Left cardiac atrium (tissue), 4 donors: ENCODE measurements at regions of chr13 and their contacts with region 1.

Region 1: DNA sequence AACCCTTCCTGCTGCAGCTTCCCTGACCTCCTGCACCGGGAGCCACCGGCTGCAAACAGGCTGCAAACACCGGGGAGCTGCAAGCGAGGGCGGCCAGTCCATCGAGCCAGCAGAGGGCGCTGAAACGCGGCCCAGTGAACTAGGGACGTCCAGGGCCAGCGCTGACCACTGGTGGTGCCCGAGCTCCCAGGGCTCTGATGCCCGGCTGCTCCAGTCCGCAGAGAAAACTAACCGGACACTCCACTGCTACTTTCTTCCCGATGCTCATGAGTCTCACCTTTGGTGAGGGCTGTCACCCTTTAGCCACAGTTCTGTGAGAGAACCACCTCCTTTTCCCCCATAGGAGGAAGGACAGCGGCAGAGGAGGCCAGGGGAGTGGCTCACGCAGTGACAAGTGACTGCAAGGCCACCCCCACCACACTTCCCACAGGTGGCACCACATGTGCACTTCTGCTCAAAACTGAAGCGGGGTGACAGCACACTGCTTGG is 82.8 kb upstream of the MTIF3 start:
- DNase-seq: peak; percentile 88
- ATAC-seq: peak; percentile 99

Region 2: DNA sequence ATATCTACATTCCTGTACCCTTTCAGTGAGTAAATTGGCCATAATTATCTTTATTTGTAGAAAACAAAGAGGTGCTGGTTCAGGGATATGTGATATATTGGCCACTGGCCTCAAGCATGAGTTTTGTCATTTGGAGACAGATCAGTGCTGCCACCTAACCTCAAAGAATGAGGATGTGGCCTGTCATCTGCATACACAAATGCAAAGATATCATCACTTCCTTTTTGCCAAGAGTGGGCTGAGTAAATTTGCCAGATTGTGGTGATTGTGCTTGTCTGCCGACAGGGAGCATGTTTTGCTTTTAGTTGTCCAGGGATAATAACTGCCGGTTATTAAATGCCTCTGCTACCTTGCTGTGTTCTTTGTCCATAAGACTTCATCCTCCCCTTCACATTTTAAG is 931.5 kb before region 1 on chr13:
- intact Hi-C with region 1: no loop called
- DNase-seq: no peak
- ATAC-seq: no peak

Region 3: DNA sequence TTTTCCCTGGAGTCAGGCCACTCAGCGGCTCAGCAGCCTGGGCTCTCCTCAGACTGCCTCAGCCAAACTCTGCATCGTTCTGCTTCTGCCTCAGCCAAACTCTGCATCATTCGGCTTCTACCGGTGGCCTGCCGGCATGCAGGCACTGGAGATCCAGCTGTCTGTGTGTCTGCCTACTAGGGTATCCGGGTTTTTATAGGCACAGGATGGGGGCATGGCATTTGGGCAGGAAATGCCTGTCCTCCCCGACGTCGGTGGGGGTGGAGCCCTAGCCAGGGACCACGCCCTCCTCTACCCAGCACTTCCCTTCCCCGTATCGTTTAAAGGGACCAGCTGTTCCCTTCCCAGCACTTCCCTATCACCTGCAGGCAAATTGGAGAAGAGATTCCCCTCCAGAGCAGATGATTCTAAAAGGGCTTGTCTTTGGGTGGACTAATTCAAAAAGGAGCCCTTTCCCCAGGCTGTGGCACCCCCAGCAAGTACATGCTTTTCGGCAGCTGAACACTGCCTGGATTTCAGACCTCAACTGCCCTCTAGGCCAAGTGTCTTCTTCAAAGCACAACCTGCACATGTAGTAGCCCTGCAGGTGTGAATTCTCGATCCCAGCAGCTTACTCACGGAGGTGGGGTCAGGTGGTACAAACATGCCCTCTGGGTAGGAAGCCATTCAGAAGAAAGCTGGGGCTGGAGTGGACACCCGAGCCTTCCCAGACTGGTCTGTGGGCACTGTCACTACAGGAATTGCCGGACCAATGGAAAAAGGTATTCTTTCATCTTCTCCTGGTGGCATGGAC is 747.2 kb before region 1 on chr13:
- intact Hi-C with region 1: no loop called
- DNase-seq: peak; percentile 41
- ATAC-seq: peak in 1 of 2 donors; percentile 84

Region 4: DNA sequence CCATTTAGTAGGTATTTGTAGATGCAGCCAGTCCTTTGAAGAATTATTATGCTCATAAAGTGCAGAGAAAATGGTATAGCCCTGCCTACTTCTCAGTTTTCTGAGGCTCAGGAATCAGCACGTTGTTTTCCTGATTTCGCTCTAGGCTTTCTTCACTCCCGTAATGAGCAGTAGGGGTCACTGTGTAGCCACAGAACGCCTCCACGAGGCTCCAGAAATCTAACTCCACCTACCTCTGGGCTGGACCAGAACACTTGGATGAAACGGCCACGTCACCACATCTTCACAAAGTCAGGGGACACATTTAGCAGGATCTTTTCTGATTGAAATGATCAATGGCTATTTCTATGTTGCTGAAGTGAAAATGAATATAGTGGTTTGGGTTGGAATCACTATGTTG is 158.5 kb before region 1 on chr13:
- intact Hi-C with region 1: loop called in 1 of 2 experiments (anchors 5 kb)
- DNase-seq: peak; percentile 69
- ATAC-seq: peak; percentile 96 to 98

Region 5: DNA sequence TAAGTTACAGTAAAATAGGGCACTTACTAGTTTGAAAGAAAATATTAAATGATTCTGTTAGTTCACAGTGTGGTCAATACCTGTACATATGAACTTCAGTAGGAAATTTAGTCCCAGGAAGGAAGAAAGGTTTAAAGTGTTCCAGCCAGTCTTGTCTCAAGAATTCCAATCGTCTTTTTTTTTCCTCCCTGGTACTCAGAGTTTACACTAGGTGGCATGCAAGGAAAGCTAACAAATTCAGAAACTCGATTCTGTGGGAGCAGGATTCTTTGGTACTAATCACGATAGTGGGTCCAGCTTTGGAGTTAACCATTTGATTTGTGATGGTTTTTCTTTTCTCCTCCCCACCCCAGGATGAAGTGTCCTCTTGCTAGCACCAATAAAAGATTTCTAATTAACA is 132.1 kb after region 1 on chr13:
- intact Hi-C with region 1: loop called in 1 of 2 experiments (anchors 10 kb)
- DNase-seq: no peak
- ATAC-seq: no peak

Region 6: DNA sequence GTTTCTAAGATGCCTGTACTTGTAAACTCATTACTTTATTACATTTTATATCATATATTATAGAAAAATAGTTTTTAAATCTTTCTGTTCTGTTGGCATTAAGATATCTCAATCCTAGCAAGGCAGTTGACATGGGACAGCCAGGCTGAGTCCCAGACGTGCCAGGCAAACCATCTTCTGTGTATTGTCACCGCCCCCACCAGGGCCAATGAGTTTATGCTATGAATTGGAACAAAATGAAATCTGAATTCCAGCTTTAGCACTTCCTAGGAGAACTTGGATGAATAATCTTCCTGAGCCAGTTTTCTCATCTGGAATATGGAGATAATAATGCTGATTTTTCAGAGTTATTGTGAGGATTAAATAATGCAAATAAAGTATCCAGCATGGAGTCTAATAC is 179.2 kb after region 1 on chr13:
- intact Hi-C with region 1: loop called in 1 of 2 experiments (anchors 5 kb)
- DNase-seq: peak; percentile 35
- ATAC-seq: peak; percentile 34 to 50

Region 7: GRCh38 chr13:27783111-27783510 is 249.9 kb after region 1 on chr13:
- intact Hi-C with region 1: loop called in 1 of 2 experiments (anchors 2 kb)
- DNase-seq: no peak
- ATAC-seq: peak in 1 of 2 donors; percentile 50

Region 8: DNA sequence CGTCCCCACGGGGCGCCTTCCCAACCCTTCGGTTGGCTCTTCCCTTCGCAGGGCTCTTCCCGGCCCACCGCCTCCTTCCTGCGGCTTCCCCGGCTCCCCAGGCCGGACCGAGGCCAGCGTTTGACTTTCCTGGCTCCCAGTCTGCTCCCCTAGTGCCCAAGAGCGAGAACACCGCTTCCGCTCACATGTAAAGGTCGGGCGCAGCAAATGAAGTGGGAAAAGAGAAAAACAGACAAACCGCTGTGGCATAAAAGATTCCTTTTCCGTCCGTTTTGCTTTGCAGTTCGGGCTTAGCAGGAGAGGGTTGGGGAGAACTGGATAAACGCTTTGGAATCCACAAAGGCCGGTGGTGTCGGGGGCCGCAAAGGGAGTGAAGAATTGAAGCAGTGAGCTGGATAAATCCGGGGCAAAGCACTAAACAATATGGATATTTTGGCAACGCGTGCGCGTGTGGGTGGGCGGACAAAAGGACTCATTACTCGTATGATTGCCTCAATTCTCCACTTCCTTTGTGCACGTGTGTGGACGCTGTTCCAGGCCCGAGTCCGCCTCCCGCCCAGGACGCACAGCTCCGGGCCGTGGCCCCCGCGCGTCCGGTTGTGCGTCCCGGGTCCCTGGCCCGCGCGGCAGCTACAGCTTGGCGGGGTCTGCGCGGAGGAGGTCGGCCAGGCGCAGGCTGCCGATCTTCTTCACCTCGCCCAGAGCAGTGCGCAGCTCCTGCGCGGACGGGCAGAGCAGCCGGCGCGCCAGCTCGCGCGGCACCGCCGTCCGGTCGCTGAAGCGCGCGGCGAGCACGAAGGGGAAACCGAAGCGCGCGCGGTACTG is 444.5 kb after region 1 on chr13:
- intact Hi-C with region 1: loop called in 1 of 2 experiments (anchors 10 kb)
- DNase-seq: no peak
- ATAC-seq: no peak